Naive thymus-derived CD4-positive, alpha-beta T cell (primary cell): ENCODE measurements at regions of chr12 and their contacts with region 1.

Region 1: DNA sequence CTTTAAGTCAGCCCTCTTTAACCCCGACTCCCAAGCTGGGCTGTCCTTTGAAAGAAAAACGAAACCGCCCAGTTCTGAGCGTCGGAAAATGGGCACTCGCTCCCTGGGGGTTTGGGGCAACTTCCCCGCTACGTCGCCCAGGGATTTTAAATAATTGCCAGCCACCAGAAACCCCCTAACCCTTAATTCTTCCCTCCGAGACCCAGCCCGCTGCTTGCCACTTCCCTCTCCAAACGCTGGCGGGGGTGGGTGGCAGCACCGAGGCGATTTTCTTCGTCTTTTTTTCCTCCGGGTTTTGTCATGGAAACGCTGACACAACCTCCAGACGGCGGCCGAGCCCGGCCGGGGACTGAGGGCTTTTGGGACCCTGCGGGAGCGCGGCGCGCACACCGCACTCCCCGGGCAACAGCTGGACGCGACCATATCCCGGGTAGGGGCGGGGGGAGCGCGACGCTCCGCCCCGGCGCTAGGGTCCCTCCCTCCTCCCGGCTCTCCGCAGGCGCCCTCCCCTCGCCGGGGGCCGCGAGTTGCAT is at the start of gene CHST11:
- DNase-seq: peak in 8 of 9 donors; percentile 33 to 84 (median 60)
- ATAC-seq: peak; percentile 83
- H3K4me3 ChIP-seq: peak within 1 kb of the TSS; percentile 83
- H3K4me3 Mint-ChIP-seq: peak within 1 kb of the TSS; percentile 75 to 100 (median 99)
- H3K27ac ChIP-seq: peak within 1 kb of the TSS; percentile 85
- H3K27ac Mint-ChIP-seq: peak within 1 kb of the TSS; percentile 84 to 99 (median 95)
- H3K4me1 ChIP-seq: peaks cover 25% of the 10 kb centered on the region in 2 donors
- H3K4me1 Mint-ChIP-seq: peaks cover 19 to 47% (median 36%) of the 10 kb centered on the region in 7 donors
- H3K27me3 ChIP-seq: no peaks in the 10 kb centered on the region
- H3K27me3 Mint-ChIP-seq: peaks cover 0 to 7% (median 0%) of the 10 kb centered on the region in 5 donors
- total RNA-seq, gene CHST11: 31.9 to 74.3 (median 42.0) TPM

Region 2: GRCh38 chr12:104286538-104287482 is 169.7 kb before region 1 on chr12:
- CTCF ChIA-PET with region 1: no interaction called
- POLR2A ChIA-PET with region 1: interaction called, 9 read pairs
- intact Hi-C with region 1: loop called in 1 of 2 experiments (anchors 2 kb)
- DNase-seq: peak; percentile 72 to 90 (median 87)
- ATAC-seq: peak; percentile 93
- H3K4me3 ChIP-seq: peak overlapping the region; percentile 73
- H3K4me3 Mint-ChIP-seq: peak overlapping the region; percentile 86 to 100 (median 98)
- H3K27ac ChIP-seq: peak overlapping the region; percentile 66
- H3K27ac Mint-ChIP-seq: peak overlapping the region; percentile 85 to 99 (median 94)
- H3K4me1 ChIP-seq: peaks cover 18 to 19% of the 10 kb centered on the region in 2 donors
- H3K4me1 Mint-ChIP-seq: peaks cover 14 to 40% (median 34%) of the 10 kb centered on the region in 7 donors
- H3K27me3 ChIP-seq: no peaks in the 10 kb centered on the region
- H3K27me3 Mint-ChIP-seq: peaks cover 0 to 1% (median 0%) of the 10 kb centered on the region in 5 donors

Region 3: GRCh38 chr12:104478396-104479122 is 22.1 kb after region 1 on chr12:
- CTCF ChIA-PET with region 1: interaction called, 13 read pairs
- POLR2A ChIA-PET with region 1: interaction called, 50 read pairs
- intact Hi-C with region 1: no loop called
- DNase-seq: peak in 4 of 9 donors; percentile 18 to 45 (median 34)
- ATAC-seq: peak; percentile 84
- H3K4me3 ChIP-seq: peak overlapping the region; percentile 22
- H3K4me3 Mint-ChIP-seq: peak overlapping the region; percentile 82 to 93 (median 89)
- H3K27ac ChIP-seq: peak overlapping the region; percentile 49
- H3K27ac Mint-ChIP-seq: peak overlapping the region; percentile 83 to 97 (median 90)
- H3K4me1 ChIP-seq: peaks cover 66 to 67% of the 10 kb centered on the region in 2 donors
- H3K4me1 Mint-ChIP-seq: peaks cover 57 to 90% (median 86%) of the 10 kb centered on the region in 7 donors
- H3K27me3 ChIP-seq: no peaks in the 10 kb centered on the region
- H3K27me3 Mint-ChIP-seq: no peaks in the 10 kb centered on the region

Region 4: DNA sequence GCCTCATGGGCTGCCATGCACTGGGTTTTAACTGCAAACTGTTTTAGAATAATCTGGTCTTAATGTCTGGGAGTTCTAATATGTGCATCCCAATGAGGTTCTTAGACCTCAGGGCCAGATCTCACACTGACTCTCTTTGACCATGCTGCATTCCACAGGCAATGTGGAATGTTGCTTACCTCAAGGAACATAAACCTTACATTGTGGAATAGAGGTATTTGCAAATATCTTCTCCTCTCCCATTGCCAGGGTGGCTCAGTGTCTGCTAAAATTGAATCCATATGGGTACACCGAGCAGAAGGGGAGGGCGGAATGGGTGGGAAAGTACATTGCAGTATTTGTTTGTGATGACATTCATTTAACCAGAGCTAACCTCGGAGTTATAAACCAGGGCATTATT is 78.9 kb after region 1 on chr12:
- CTCF ChIA-PET with region 1: interaction called, 3 read pairs
- POLR2A ChIA-PET with region 1: no interaction called
- intact Hi-C with region 1: loop called in 1 of 2 experiments (anchors 5 kb)
- DNase-seq: no peak
- ATAC-seq: no peak
- H3K4me3 ChIP-seq: no peak overlapping the region
- H3K4me3 Mint-ChIP-seq: no peak overlapping the region
- H3K27ac ChIP-seq: no peak overlapping the region
- H3K27ac Mint-ChIP-seq: peak overlapping the region in 2 of 9 donors; percentile 6 to 16
- H3K4me1 ChIP-seq: peaks cover 0 to 5% of the 10 kb centered on the region in 2 donors
- H3K4me1 Mint-ChIP-seq: peaks cover 35 to 73% (median 62%) of the 10 kb centered on the region in 7 donors
- H3K27me3 ChIP-seq: no peaks in the 10 kb centered on the region
- H3K27me3 Mint-ChIP-seq: no peaks in the 10 kb centered on the region

Region 5: DNA sequence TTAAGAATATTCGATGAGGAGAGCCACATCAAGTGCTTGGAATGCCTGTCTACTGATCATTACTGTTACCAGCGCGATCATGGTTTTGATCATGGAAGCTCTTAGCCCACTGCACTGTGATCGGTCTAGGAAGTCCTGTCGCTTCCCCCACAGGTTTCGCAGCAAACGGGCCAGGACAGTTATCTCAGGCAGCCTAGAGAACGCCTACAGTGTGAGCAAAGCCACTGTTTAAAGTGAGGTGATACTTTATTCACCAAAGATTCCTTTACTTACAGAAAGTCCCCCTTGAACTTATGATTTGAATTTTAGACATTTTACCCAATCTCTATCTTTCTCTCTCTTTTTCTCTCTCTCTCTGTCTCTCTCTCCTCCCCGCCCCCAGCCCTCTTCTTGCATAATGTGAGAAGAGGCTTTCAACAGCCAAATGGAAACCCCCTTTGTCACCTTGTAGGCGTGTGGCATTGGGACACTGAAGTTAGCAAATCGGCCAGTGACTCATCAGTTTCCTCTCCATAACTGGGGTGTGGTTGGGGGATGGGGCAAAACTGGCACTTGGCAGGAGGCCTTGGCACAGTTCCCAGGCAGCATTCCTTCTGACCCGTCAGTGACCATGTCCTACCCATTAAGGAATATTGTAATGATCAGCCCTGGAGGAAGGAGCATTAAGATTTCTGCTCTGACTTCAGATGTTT is 215.1 kb after region 1 on chr12:
- CTCF ChIA-PET with region 1: interaction called, 3 read pairs
- POLR2A ChIA-PET with region 1: interaction called, 3 read pairs
- intact Hi-C with region 1: loop called in 1 of 2 experiments (anchors 2 kb)
- DNase-seq: peak in 3 of 9 donors; percentile 30 to 80 (median 58)
- ATAC-seq: peak; percentile 80
- H3K4me3 ChIP-seq: no peak overlapping the region
- H3K4me3 Mint-ChIP-seq: peak overlapping the region in 7 of 10 donors; percentile 6 to 67 (median 21)
- H3K27ac ChIP-seq: no peak overlapping the region
- H3K27ac Mint-ChIP-seq: peak overlapping the region in 7 of 9 donors; percentile 11 to 92 (median 67)
- H3K4me1 ChIP-seq: peaks cover 25 to 36% of the 10 kb centered on the region in 2 donors
- H3K4me1 Mint-ChIP-seq: peaks cover 32 to 64% (median 48%) of the 10 kb centered on the region in 7 donors
- H3K27me3 ChIP-seq: no peaks in the 10 kb centered on the region
- H3K27me3 Mint-ChIP-seq: no peaks in the 10 kb centered on the region

Region 6: GRCh38 chr12:104877123-104877705 is 420.7 kb after region 1 on chr12:
- CTCF ChIA-PET with region 1: no interaction called
- POLR2A ChIA-PET with region 1: no interaction called
- intact Hi-C with region 1: loop called in 1 of 2 experiments (anchors 1 kb)
- DNase-seq: peak in 7 of 9 donors; percentile 5 to 52 (median 29)
- ATAC-seq: peak; percentile 56
- H3K4me3 ChIP-seq: no peak overlapping the region
- H3K4me3 Mint-ChIP-seq: no peak overlapping the region
- H3K27ac ChIP-seq: no peak overlapping the region
- H3K27ac Mint-ChIP-seq: no peak overlapping the region
- H3K4me1 ChIP-seq: no peaks in the 10 kb centered on the region
- H3K4me1 Mint-ChIP-seq: peaks cover 0 to 9% (median 0%) of the 10 kb centered on the region in 7 donors
- H3K27me3 ChIP-seq: no peaks in the 10 kb centered on the region
- H3K27me3 Mint-ChIP-seq: peaks cover 0 to 12% (median 0%) of the 10 kb centered on the region in 5 donors